Heart right ventricle (tissue), 16 donors: ENCODE measurements at regions of chr1 and their contacts with region 1.

Region 1: DNA sequence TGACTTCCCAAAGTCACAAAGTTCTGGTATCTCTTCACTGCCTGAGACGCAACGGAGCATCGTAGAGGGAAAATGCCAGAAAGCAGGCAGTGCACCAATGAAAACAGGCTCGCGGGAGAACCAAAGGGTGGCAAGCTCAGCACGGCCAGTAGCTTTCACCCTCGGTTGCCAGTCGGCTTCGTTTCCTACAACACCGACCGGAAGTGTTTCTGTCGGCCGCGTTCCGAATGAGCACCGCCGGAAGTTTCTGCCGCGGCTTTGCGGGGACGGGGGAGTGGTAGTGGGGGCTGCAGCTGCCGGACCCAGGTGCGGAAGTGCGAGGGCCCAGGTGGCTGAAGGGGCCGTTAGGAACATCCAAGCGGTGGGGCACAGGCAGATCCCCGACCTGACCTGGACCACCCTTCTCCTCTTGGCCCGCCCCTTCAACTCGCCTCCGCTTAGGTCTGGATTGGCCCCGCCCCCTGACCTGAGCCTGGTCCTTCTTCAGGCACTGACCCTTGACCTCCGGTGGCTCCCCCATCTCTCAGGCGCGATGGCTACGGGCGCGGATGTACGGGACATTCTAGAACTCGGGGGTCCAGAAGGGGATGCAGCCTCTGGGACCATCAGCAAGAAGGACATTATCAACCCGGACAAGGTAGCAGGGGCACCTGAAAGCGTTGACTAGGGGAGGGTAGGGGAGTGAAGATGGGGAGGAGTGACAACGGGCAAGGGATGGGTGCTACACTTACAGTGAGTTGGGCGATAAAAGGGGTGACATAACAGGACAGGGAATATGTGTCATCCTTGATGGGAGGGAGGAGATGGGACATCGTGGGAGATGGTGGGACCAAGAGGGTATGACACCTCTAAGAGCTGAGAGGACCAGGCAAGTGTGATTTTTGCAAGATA is at the start of gene DMAP1:
- DNase-seq: peak; percentile 82 to 83
- ATAC-seq: peak; percentile 88 to 95 (median 94)
- H3K4me3 ChIP-seq: peak within 1 kb of the TSS; percentile 70 to 99 (median 83)
- H3K27ac ChIP-seq: peak within 1 kb of the TSS; percentile 53 to 89 (median 84)
- H3K4me1 ChIP-seq: peaks cover 2 to 33% (median 18%) of the 10 kb centered on the region in 9 donors
- H3K27me3 ChIP-seq: no peaks in the 10 kb centered on the region
- CTCF ChIP-seq: peak in 2 of 9 donors; percentile 22
- total RNA-seq, gene DMAP1: 24.1 to 33.9 (median 27.6) TPM

Region 2: GRCh38 chr1:44294588-44295007 is 81.1 kb after region 1 on chr1:
- intact Hi-C with region 1: loop called in 2 of 10 experiments (anchors 5 kb)
- DNase-seq: peak in 1 of 2 donors; percentile 9
- ATAC-seq: peak in 4 of 8 donors; percentile 15 to 67 (median 20)
- H3K4me3 ChIP-seq: no peak overlapping the region
- H3K27ac ChIP-seq: peak overlapping the region in 3 of 10 donors; percentile 34 to 76 (median 45)
- H3K4me1 ChIP-seq: peaks cover 0 to 18% (median 13%) of the 10 kb centered on the region in 9 donors
- H3K27me3 ChIP-seq: no peaks in the 10 kb centered on the region
- CTCF ChIP-seq: peak in 4 of 9 donors; percentile 18 to 41 (median 32)

Region 3: GRCh38 chr1:44500181-44501046 is 286.9 kb after region 1 on chr1:
- intact Hi-C with region 1: loop called in 4 of 10 experiments (anchors 5 to 10 kb)
- DNase-seq: peak; percentile 16 to 20
- ATAC-seq: peak; percentile 58 to 84 (median 74)
- H3K4me3 ChIP-seq: peak overlapping the region in 5 of 10 donors; percentile 1 to 28 (median 14)
- H3K27ac ChIP-seq: peak overlapping the region in 3 of 10 donors; percentile 9 to 60 (median 25)
- H3K4me1 ChIP-seq: peaks cover 0 to 38% (median 21%) of the 10 kb centered on the region in 9 donors
- H3K27me3 ChIP-seq: peaks cover 0 to 9% (median 0%) of the 10 kb centered on the region in 7 donors
- CTCF ChIP-seq: peak; percentile 17 to 71 (median 53)

Region 4: DNA sequence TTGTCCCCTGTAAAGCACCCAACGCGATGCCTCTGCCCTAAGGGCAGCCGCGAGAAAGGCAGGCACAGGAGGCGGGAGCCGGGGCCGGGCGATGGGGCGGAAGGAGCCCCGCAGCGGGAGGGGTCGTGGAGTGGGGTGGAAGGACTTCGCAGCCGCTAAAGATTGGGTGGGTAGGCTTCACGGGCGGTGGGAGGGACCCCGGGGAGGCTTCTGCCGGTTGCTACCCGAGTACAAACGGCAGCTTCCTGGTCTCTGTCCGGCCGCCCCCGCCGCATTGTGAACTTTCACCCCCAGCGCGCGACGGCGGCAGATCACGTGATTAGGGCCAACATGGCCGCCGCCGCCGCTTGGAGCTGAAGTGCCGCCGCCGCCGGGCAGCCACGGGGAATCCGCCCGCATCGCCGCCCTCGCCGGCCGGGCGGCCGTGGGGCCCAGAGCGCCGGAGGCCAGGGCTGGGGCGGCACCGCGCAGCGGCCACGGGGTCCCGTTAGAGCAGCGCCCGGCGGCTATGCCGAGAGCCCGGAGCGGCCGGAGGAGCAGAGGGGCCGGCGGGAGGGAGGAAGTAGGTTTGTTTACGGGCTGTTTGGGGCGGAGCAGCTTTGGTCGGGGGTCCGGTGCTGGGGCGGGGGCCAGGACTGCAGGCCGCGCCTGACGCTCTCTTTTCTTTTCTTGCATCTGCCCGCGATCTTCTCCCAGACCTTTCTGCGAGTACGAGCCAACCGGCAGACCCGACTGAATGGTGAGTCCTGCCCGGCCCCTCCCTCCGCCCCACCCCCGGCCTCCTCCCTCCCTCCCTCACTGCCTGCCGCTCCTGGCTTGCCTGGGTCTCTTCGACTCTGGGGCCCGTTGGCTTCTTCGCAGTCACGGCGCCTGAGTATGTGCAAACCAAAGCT is 418.4 kb after region 1 on chr1:
- intact Hi-C with region 1: loop called in 1 of 10 experiments (anchors 10 kb)
- DNase-seq: peak; percentile 92 to 93
- ATAC-seq: peak; percentile 82 to 94 (median 87)
- H3K4me3 ChIP-seq: peak overlapping the region; percentile 65 to 90 (median 86)
- H3K27ac ChIP-seq: peak overlapping the region; percentile 91 to 99 (median 97)
- H3K4me1 ChIP-seq: peaks cover 3 to 52% (median 34%) of the 10 kb centered on the region in 9 donors
- H3K27me3 ChIP-seq: no peaks in the 10 kb centered on the region
- CTCF ChIP-seq: no peak